ENCODE measurements at regions of chrX and their contacts with region 1.

Region 1: GRCh38 chrX:150982788-150983520 is at the start of gene HMGB3:
- DNase-seq: peak; percentile 45 to 80 (median 59)
- ATAC-seq: peak; percentile 98
- H3K4me3 ChIP-seq: peak within 1 kb of the TSS; percentile 48
- H3K4me3 Mint-ChIP-seq: peak within 1 kb of the TSS; percentile 66 to 84 (median 73)
- H3K27ac ChIP-seq: no peak within 1 kb of the TSS
- H3K27ac Mint-ChIP-seq: peak within 1 kb of the TSS in 2 of 9 donors; percentile 29 to 59
- H3K4me1 ChIP-seq: no peaks in the 10 kb centered on the region
- H3K4me1 Mint-ChIP-seq: peaks cover 0 to 16% (median 6%) of the 10 kb centered on the region in 7 donors
- H3K27me3 ChIP-seq: no peaks in the 10 kb centered on the region
- H3K27me3 Mint-ChIP-seq: peaks cover 0 to 18% (median 7%) of the 10 kb centered on the region in 5 donors
- total RNA-seq, gene HMGB3: 0.51 to 23.5 (median 2.6) TPM

Region 2: GRCh38 chrX:149938427-149939270 is 1044.3 kb before region 1 on chrX and contains the start of gene EOLA2:
- CTCF ChIA-PET with region 1: no interaction called
- POLR2A ChIA-PET with region 1: no interaction called
- intact Hi-C with region 1: loop called in 1 of 2 experiments (anchors 10 kb)
- DNase-seq: peak; percentile 67 to 96 (median 92)
- ATAC-seq: peak; percentile 67
- H3K4me3 ChIP-seq: peak within 1 kb of the TSS; percentile 57
- H3K4me3 Mint-ChIP-seq: peak within 1 kb of the TSS; percentile 81 to 98 (median 92)
- H3K27ac ChIP-seq: peak within 1 kb of the TSS; percentile 90
- H3K27ac Mint-ChIP-seq: peak within 1 kb of the TSS; percentile 92 to 99 (median 99)
- H3K4me1 ChIP-seq: peaks cover 5% of the 10 kb centered on the region in 2 donors
- H3K4me1 Mint-ChIP-seq: peaks cover 0 to 7% (median 0%) of the 10 kb centered on the region in 7 donors
- H3K27me3 ChIP-seq: no peaks in the 10 kb centered on the region
- H3K27me3 Mint-ChIP-seq: no peaks in the 10 kb centered on the region
- total RNA-seq, gene EOLA2: 43.1 to 59.1 (median 45.4) TPM

Region 3: GRCh38 chrX:150715184-150715583 is 267.8 kb before region 1 on chrX:
- CTCF ChIA-PET with region 1: no interaction called
- POLR2A ChIA-PET with region 1: no interaction called
- intact Hi-C with region 1: no loop called
- DNase-seq: no peak
- ATAC-seq: no peak
- H3K4me3 ChIP-seq: no peak overlapping the region
- H3K4me3 Mint-ChIP-seq: no peak overlapping the region
- H3K27ac ChIP-seq: no peak overlapping the region
- H3K27ac Mint-ChIP-seq: peak overlapping the region in 8 of 9 donors; percentile 6 to 80 (median 67)
- H3K4me1 ChIP-seq: peaks cover 0 to 8% of the 10 kb centered on the region in 2 donors
- H3K4me1 Mint-ChIP-seq: peaks cover 16 to 60% (median 28%) of the 10 kb centered on the region in 7 donors
- H3K27me3 ChIP-seq: no peaks in the 10 kb centered on the region
- H3K27me3 Mint-ChIP-seq: no peaks in the 10 kb centered on the region

Region 4: DNA sequence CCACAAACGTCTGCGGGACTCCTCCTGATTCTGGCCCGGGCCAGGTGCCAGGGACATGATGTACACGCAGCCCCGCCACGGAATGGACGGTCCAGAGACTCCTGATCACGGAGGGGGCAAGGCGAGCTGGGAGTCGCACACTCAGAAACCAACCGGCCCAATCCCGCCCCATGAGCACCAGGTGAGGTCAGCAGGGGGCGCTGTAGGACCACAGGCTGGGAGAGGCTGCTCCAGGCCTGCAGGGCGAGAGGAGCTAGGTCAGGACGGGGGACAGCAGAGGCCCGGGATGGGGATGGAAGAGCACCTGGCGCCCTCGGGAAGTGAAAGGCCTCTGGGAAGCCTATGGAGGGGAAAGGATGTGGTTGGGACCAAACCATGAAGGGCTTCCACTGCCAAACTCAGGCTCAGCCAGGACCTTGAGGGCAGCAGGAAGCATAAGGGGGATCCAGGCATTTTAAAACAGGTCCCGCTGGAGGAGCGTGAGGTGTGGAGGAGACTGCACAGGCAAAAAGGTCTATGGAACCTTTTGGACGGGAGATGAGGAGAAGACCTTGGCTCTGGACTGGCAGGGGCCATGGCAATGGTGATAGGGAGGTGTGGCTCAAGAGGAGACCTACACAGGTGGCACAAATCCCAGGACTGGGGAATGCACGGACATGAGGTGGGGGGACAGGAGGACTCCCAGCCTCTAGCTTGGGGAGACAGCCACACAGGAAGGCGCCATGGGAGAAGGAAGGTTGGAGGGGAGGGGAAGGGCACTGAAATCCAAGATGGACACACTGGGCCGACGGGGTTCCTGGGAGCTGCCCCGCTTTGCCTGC is 210.6 kb before region 1 on chrX:
- CTCF ChIA-PET with region 1: no interaction called
- POLR2A ChIA-PET with region 1: no interaction called
- intact Hi-C with region 1: loop called (anchors 5 to 10 kb)
- DNase-seq: peak; percentile 34 to 80 (median 61)
- ATAC-seq: peak; percentile 86
- H3K4me3 ChIP-seq: no peak overlapping the region
- H3K4me3 Mint-ChIP-seq: no peak overlapping the region
- H3K27ac ChIP-seq: no peak overlapping the region
- H3K27ac Mint-ChIP-seq: peak overlapping the region in 1 of 9 donors; percentile 62
- H3K4me1 ChIP-seq: no peaks in the 10 kb centered on the region
- H3K4me1 Mint-ChIP-seq: peaks cover 0 to 3% (median 0%) of the 10 kb centered on the region in 7 donors
- H3K27me3 ChIP-seq: no peaks in the 10 kb centered on the region
- H3K27me3 Mint-ChIP-seq: no peaks in the 10 kb centered on the region

Region 5: DNA sequence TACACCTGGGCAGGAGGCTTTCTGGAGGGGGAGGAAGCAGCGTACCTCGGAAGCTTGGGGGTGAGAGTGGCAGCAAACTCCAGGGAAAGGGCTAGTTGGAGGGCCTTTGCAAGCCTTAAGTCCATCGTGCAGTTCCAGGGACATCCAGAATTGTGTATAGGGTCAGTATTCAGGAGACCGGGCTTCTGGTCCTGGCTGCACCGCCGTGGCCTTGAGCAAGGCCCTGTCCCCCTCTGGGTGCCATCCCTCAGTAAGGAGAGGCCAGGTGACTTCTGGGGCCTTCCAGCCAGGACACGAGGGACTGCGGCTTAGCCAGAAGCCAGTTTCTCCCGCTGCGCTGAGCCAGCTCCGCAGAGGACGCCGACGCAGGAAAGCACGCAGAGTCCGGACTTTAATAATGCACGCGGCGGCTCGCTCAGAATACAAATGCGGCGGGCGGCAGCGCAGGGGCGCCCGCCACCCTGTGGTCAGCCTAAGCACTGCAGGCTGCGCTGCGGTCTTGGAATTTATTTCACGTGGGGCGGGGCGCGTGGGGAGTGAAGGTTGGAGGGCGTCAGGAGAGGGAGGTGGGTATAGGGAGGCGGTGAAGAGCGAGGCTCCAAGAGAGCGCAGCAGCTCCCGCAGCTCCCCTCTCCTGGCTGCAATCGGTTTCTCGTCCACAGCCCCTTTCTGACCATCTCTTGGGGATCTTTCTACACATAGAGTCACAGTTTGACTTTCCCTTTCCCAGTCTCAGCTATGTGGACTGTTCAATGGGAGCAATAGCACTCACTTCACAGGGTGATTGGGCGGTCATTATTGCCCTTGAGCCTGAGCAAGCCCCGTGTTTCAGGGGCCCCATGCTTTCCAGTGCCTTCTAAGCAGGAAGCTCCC is 99.4 kb after region 1 on chrX:
- CTCF ChIA-PET with region 1: no interaction called
- POLR2A ChIA-PET with region 1: no interaction called
- intact Hi-C with region 1: loop called in 1 of 2 experiments (anchors 5 kb)
- DNase-seq: peak; percentile 19 to 62 (median 45)
- ATAC-seq: peak; percentile 91
- H3K4me3 ChIP-seq: no peak overlapping the region
- H3K4me3 Mint-ChIP-seq: peak overlapping the region in 7 of 10 donors; percentile 12 to 61 (median 49)
- H3K27ac ChIP-seq: no peak overlapping the region
- H3K27ac Mint-ChIP-seq: no peak overlapping the region
- H3K4me1 ChIP-seq: no peaks in the 10 kb centered on the region
- H3K4me1 Mint-ChIP-seq: peaks cover 0 to 7% (median 0%) of the 10 kb centered on the region in 7 donors
- H3K27me3 ChIP-seq: no peaks in the 10 kb centered on the region
- H3K27me3 Mint-ChIP-seq: peaks cover 5 to 25% (median 14%) of the 10 kb centered on the region in 5 donors

Region 6: DNA sequence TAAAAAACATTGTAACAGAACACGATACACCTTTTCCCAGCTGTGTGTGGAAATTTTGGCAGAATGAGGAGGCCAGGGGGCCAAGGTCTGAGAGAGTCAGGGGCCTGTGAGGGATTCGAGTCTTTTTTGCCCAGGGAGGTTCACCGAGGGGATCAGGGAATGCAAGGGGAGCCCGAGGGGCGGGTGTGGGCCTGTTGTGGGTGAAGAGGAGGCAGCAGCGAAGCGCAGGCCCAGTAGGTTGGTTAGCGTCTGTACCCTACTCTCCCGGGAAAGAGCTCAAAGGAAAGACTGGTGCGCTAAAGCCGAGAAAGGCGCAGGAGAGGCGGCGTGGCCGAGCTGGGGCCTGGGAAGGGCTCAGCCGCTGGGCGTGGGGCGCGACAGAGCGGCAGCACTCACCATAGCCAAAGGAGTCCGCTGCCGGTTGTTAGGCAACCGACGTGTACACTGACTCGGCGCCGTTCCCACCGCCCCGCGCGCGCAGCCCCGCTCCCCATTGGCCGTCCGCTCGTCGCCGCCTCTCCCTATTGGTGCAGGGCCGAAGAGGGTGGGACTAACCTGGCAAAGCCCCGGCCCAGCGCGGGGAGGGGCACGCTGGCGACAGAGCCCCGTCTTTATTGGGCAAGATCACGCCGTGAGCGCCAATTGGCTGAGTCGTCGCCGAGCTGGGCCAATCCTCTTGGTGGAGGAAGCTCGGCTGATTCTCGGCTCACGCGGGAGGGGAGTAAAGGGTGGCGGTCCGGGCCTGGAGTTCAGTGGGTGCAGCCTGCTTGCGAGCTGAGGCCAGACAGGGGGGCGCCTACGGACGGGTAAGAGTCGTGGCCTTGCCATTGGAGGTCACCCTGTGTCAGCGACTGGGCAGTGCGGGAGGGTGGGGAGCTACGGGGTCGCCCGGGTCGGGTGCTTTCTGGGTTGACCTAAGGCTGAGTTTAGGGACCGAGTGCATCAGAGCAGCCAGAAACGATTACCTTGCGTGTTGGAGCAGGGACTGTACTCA is 1847.7 kb after region 1 on chrX and contains the starts of genes CETN2 and NSDHL:
- CTCF ChIA-PET with region 1: no interaction called
- POLR2A ChIA-PET with region 1: no interaction called
- intact Hi-C with region 1: loop called (anchors 10 kb)
- DNase-seq: peak; percentile 83 to 95 (median 92)
- ATAC-seq: peak; percentile 98
- H3K4me3 ChIP-seq: peak within 1 kb of the TSS; percentile 67
- H3K4me3 Mint-ChIP-seq: peak within 1 kb of the TSS; percentile 87 to 98 (median 92)
- H3K27ac ChIP-seq: peak within 1 kb of the TSS; percentile 82
- H3K27ac Mint-ChIP-seq: peak within 1 kb of the TSS; percentile 52 to 98 (median 94)
- H3K4me1 ChIP-seq: peaks cover 6 to 9% of the 10 kb centered on the region in 2 donors
- H3K4me1 Mint-ChIP-seq: peaks cover 11 to 28% (median 26%) of the 10 kb centered on the region in 7 donors
- H3K27me3 ChIP-seq: no peaks in the 10 kb centered on the region
- H3K27me3 Mint-ChIP-seq: no peaks in the 10 kb centered on the region
- total RNA-seq, gene CETN2: 7.0 to 10.9 (median 7.6) TPM
- total RNA-seq, gene NSDHL: 3.3 to 13.9 (median 7.2) TPM

Measured in naive thymus-derived CD4-positive, alpha-beta T cell (primary cell).